Mammary epithelial cell (primary cell): ENCODE measurements at regions of chr1 and their contacts with region 1.

Region 1: GRCh38 chr1:172429331-172430127 is 9.0 kb downstream of the C1orf105 start:
- DNase-seq: peak; percentile 64
- H3K4me3 ChIP-seq: no peak overlapping the region
- H3K27ac ChIP-seq: no peak overlapping the region
- H3K4me1 ChIP-seq: peaks cover 12% of the 10 kb centered on the region
- H3K27me3 ChIP-seq: no peaks in the 10 kb centered on the region
- CTCF ChIP-seq: peak; percentile 80 to 86

Region 2: DNA sequence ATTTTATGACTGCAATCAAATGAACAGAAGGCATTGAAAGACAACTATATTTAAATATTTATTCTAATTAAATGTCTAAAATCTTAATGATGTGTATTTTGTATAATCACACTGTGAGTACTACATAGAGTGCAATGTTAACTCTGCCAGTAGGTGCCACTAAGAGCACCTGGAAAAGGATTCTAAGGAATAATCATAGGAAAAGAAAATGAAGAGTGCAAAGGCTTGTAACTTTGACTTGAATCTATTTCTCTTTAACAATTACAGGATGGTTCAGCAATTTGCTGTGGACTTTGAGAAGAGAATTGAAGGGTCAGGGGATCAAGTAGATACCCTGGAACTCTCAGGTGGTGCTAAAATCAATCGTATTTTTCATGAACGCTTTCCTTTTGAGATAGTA is 387.8 kb before region 1 on chr1:
- CTCF ChIA-PET with region 1: no interaction called
- dilution Hi-C with region 1: no loop called
- in situ Hi-C with region 1: no loop called
- intact Hi-C with region 1: loop called (anchors 1 kb)
- DNase-seq: no peak
- H3K4me3 ChIP-seq: no peak overlapping the region
- H3K27ac ChIP-seq: no peak overlapping the region
- H3K4me1 ChIP-seq: peaks cover 19% of the 10 kb centered on the region
- H3K27me3 ChIP-seq: no peaks in the 10 kb centered on the region
- CTCF ChIP-seq: peak; percentile 35 to 49

Region 3: GRCh38 chr1:172089768-172090510 is 339.6 kb before region 1 on chr1:
- CTCF ChIA-PET with region 1: no interaction called
- dilution Hi-C with region 1: loop called (anchors 25 kb)
- in situ Hi-C with region 1: loop called in 1 of 2 experiments (anchors 25 kb)
- intact Hi-C with region 1: loop called (anchors 1 kb)
- DNase-seq: peak; percentile 53
- H3K4me3 ChIP-seq: no peak overlapping the region
- H3K27ac ChIP-seq: no peak overlapping the region
- H3K4me1 ChIP-seq: no peaks in the 10 kb centered on the region
- H3K27me3 ChIP-seq: no peaks in the 10 kb centered on the region
- CTCF ChIP-seq: peak; percentile 92 to 96

Region 4: GRCh38 chr1:172443626-172444453 is 14.3 kb after region 1 on chr1 and contains the start of gene PIGC:
- CTCF ChIA-PET with region 1: no interaction called
- dilution Hi-C with region 1: no loop called
- in situ Hi-C with region 1: no loop called
- intact Hi-C with region 1: loop called (anchors 1 kb)
- DNase-seq: peak; percentile 73
- H3K4me3 ChIP-seq: peak within 1 kb of the TSS; percentile 84 to 89 (median 89)
- H3K27ac ChIP-seq: peak within 1 kb of the TSS; percentile 74
- H3K4me1 ChIP-seq: peaks cover 27% of the 10 kb centered on the region
- H3K27me3 ChIP-seq: no peaks in the 10 kb centered on the region
- CTCF ChIP-seq: peak; percentile 74 to 94
- total RNA-seq, gene PIGC: 17.7 to 18.3 TPM

Region 5: GRCh38 chr1:172609528-172609927 is 180.0 kb after region 1 on chr1:
- CTCF ChIA-PET with region 1: no interaction called
- dilution Hi-C with region 1: no loop called
- in situ Hi-C with region 1: no loop called
- intact Hi-C with region 1: loop called (anchors 5 kb)
- DNase-seq: peak; percentile 19
- H3K4me3 ChIP-seq: no peak overlapping the region
- H3K27ac ChIP-seq: no peak overlapping the region
- H3K4me1 ChIP-seq: peaks cover 4% of the 10 kb centered on the region
- H3K27me3 ChIP-seq: no peaks in the 10 kb centered on the region
- CTCF ChIP-seq: peak; percentile 39 to 56

Region 6: GRCh38 chr1:172719694-172720138 is 290.2 kb after region 1 on chr1:
- CTCF ChIA-PET with region 1: no interaction called
- dilution Hi-C with region 1: no loop called
- in situ Hi-C with region 1: no loop called
- intact Hi-C with region 1: loop called (anchors 1 kb)
- DNase-seq: no peak
- H3K4me3 ChIP-seq: peak overlapping the region in 2 of 3 experiments; percentile 12 to 24
- H3K27ac ChIP-seq: peak overlapping the region; percentile 54
- H3K4me1 ChIP-seq: peaks cover 44% of the 10 kb centered on the region
- H3K27me3 ChIP-seq: no peaks in the 10 kb centered on the region
- CTCF ChIP-seq: peak; percentile 65 to 78